MCF 10A (cell line): ENCODE measurements at regions of chr1 and their contacts with region 1.

Region 1: GRCh38 chr1:26145041-26145959 is 13.6 kb upstream of the FAM110D start:
- DNase-seq: peak; percentile 90
- H3K4me3 Mint-ChIP-seq: no peak overlapping the region
- H3K27ac Mint-ChIP-seq: no peak overlapping the region
- H3K4me1 Mint-ChIP-seq: no peaks in the 10 kb centered on the region
- H3K27me3 Mint-ChIP-seq: peaks cover 12% of the 10 kb centered on the region
- CTCF ChIP-seq: peak; percentile 84

Region 2: GRCh38 chr1:26035959-26036755 is 109.1 kb before region 1 on chr1:
- CTCF ChIA-PET with region 1: interaction called, 55 read pairs
- POLR2A ChIA-PET with region 1: interaction called, 3 read pairs
- intact Hi-C with region 1: loop called (anchors 1 kb)
- DNase-seq: peak; percentile 70
- H3K4me3 Mint-ChIP-seq: peak overlapping the region; percentile 94
- H3K27ac Mint-ChIP-seq: peak overlapping the region; percentile 61
- H3K4me1 Mint-ChIP-seq: peaks cover 11% of the 10 kb centered on the region
- H3K27me3 Mint-ChIP-seq: no peaks in the 10 kb centered on the region
- CTCF ChIP-seq: peak; percentile 96

Region 3: GRCh38 chr1:26097696-26098095 is 47.6 kb before region 1 on chr1:
- CTCF ChIA-PET with region 1: interaction called, 75 read pairs
- POLR2A ChIA-PET with region 1: interaction called, 3 read pairs
- intact Hi-C with region 1: no loop called
- DNase-seq: no peak
- H3K4me3 Mint-ChIP-seq: no peak overlapping the region
- H3K27ac Mint-ChIP-seq: no peak overlapping the region
- H3K4me1 Mint-ChIP-seq: peaks cover 6% of the 10 kb centered on the region
- H3K27me3 Mint-ChIP-seq: peaks cover 5% of the 10 kb centered on the region
- CTCF ChIP-seq: no peak

Region 4: DNA sequence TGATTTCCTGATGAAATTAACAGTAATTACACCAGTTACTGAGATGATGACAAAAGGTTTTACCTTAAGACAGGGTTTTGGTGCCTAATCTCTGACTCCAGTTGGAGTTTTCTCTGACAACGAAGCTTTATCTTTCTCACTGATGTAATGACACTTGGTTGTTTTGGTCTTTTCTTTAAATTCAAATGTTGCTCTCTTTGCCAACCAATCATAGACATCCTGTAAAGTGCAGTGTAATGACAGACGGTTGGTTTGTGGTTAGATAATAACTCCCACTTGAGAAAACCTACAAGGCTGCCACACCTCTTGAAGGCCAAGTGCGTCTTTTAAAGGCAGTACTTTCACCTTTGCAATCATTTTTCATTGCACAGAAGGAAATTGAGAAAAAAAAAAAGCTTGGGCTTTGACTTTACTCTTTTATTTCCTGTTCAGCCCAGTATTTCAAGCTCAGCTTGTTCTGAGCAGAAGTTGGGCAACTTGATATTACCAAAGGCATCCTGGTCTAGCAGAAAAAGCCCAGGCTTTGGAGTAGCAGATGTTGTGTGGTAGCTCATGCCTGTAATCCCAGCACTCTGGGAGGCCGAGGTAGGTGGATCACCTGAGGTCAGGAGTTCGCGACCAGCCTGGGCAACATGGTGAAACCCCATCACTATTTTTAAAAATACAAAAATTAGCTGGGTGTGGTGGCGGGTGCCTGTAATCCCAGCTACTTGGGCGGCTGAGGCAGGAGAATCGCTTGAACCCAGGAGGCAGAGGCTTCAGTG is 18.8 kb before region 1 on chr1:
- CTCF ChIA-PET with region 1: interaction called, 39 read pairs
- POLR2A ChIA-PET with region 1: interaction called, 12 read pairs
- intact Hi-C with region 1: no loop called
- DNase-seq: peak; percentile 76
- H3K4me3 Mint-ChIP-seq: peak overlapping the region; percentile 12
- H3K27ac Mint-ChIP-seq: peak overlapping the region; percentile 84
- H3K4me1 Mint-ChIP-seq: peaks cover 22% of the 10 kb centered on the region
- H3K27me3 Mint-ChIP-seq: no peaks in the 10 kb centered on the region
- CTCF ChIP-seq: no peak

Region 5: DNA sequence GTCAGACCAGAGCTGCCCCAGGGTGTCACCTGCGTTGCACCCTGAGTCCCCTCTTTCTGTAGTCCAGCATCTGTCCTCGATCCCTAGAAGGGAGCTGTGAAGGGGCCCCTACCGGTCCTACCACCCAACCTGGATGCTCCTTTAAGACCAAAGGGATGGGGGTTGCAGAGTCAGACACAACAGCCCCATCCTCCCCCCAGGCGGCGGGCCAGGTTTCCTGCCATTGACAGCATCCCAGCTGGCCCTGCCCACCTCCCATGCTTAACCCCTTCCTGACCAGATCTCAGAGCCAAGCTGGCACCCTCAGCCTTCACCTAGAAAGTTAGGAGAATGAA is 11.4 kb after region 1 on chr1:
- CTCF ChIA-PET with region 1: interaction called, 18 read pairs
- POLR2A ChIA-PET with region 1: no interaction called
- intact Hi-C with region 1: no loop called
- DNase-seq: no peak
- H3K4me3 Mint-ChIP-seq: no peak overlapping the region
- H3K27ac Mint-ChIP-seq: no peak overlapping the region
- H3K4me1 Mint-ChIP-seq: no peaks in the 10 kb centered on the region
- H3K27me3 Mint-ChIP-seq: no peaks in the 10 kb centered on the region
- CTCF ChIP-seq: no peak